Prostate gland (tissue), 2 donors: ENCODE measurements at regions of chr2 and their contacts with region 1.

Region 1: GRCh38 chr2:46876741-46877384 is 38.7 kb downstream of the MCFD2 start:
- DNase-seq: peak; percentile 29
- H3K4me3 ChIP-seq: no peak overlapping the region
- H3K27ac ChIP-seq: no peak overlapping the region
- H3K4me1 ChIP-seq: no peaks in the 10 kb centered on the region
- H3K27me3 ChIP-seq: no peaks in the 10 kb centered on the region
- CTCF ChIP-seq: peak; percentile 28 to 78 (median 64)
- POLR2A ChIP-seq: no peak

Region 2: GRCh38 chr2:46657042-46657504 is 219.8 kb before region 1 on chr2:
- intact Hi-C with region 1: loop called (anchors 5 kb)
- DNase-seq: no peak
- H3K4me3 ChIP-seq: no peak overlapping the region
- H3K27ac ChIP-seq: no peak overlapping the region
- H3K4me1 ChIP-seq: no peaks in the 10 kb centered on the region
- H3K27me3 ChIP-seq: no peaks in the 10 kb centered on the region
- CTCF ChIP-seq: peak in 3 of 4 experiments; percentile 24 to 33 (median 26)
- POLR2A ChIP-seq: no peak

Region 3: GRCh38 chr2:46719487-46719886 is 157.4 kb before region 1 on chr2:
- intact Hi-C with region 1: no loop called
- DNase-seq: no peak
- H3K4me3 ChIP-seq: no peak overlapping the region
- H3K27ac ChIP-seq: no peak overlapping the region
- H3K4me1 ChIP-seq: peaks cover 1% of the 10 kb centered on the region
- H3K27me3 ChIP-seq: no peaks in the 10 kb centered on the region
- CTCF ChIP-seq: no peak
- POLR2A ChIP-seq: no peak

Region 4: DNA sequence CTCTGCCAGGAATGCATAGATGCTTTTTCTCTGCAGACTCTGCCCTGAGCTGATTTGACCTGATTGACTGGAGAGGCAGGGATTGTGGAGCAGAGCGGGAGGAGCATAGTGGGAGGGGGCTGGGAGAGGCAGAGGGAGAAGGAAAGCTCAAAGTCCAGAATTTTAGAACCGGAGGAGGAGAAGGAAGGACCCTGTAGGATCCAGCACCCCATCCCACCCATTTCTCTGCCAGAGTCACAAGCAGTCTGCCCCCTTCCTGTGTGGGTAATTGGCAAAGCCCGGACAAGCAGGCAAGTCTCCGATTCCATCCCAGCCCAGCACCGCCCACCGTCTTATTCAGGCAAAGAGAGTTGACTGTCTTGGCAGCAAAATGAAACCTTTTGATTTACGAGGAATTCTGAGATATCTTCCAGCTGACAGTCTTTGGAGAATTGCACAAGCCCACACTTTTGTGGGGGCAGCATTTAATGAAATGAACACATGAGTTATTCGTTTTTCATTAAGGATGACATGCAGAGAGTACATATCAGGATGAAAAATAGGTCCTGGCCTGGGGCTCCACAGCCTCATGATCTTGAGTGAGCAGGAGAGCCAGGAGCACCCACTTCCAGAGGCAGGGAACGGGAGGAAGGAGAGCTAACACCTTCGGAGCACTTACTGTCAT is 64.4 kb before region 1 on chr2:
- intact Hi-C with region 1: loop called (anchors 2 kb)
- DNase-seq: peak; percentile 36
- H3K4me3 ChIP-seq: no peak overlapping the region
- H3K27ac ChIP-seq: peak overlapping the region; percentile 44 to 71
- H3K4me1 ChIP-seq: peaks cover 10% of the 10 kb centered on the region
- H3K27me3 ChIP-seq: no peaks in the 10 kb centered on the region
- CTCF ChIP-seq: no peak
- POLR2A ChIP-seq: no peak

Region 5: DNA sequence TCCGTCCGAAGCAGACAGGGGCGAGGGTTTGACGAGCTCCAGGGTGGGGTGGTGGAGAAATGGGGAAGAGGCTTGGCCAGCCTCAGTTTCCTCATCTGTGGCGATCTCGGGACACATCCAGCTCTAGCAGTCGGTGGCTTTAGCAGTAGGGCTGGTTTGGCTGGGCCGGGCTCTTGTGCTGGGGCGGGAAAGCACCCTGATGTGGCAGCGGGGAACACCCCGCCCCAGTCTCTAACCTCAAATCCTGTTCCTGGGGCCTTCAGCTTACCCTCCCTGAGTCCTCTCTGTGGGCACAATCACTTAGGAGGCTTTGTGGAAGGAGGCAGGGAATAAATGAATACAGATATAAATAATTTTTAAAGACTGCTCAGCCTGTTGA is 65.3 kb after region 1 on chr2:
- intact Hi-C with region 1: no loop called
- DNase-seq: peak; percentile 53
- H3K4me3 ChIP-seq: peak overlapping the region; percentile 68 to 81
- H3K27ac ChIP-seq: peak overlapping the region; percentile 72 to 88
- H3K4me1 ChIP-seq: peaks cover 5% of the 10 kb centered on the region
- H3K27me3 ChIP-seq: no peaks in the 10 kb centered on the region
- CTCF ChIP-seq: no peak
- POLR2A ChIP-seq: peak; percentile 51